Panc1 (cell line): ENCODE measurements at regions of chr2 and their contacts with region 1.

Region 1: DNA sequence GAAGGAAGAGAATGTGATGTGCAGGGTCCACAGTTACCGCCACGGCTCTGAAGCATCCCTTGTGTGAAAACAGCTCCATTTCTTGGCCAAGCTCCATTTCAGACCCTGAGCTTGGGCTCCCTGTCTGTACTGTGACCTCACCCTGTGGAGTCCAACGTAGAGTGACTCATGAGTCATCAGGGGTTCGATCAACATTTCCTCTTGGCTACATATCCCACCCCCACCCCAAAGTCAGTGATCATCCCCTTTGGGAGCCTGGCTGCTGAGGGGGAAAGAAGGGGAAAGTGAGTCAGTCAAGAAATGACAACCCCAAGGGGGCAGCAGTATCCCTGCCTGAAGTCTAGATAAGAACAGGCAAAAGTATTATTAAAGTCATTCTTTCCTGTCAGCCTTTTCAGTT is 62.2 kb downstream of the PAPOLG start:
- DNase-seq: no peak
- ATAC-seq: no peak
- H3K4me3 ChIP-seq: no peak overlapping the region
- H3K27ac ChIP-seq: no peak overlapping the region
- H3K4me1 ChIP-seq: no peaks in the 10 kb centered on the region
- H3K27me3 ChIP-seq: no peaks in the 10 kb centered on the region; the same call in 1 of the 2 replicates
- CTCF ChIP-seq: no peak

Region 2: DNA sequence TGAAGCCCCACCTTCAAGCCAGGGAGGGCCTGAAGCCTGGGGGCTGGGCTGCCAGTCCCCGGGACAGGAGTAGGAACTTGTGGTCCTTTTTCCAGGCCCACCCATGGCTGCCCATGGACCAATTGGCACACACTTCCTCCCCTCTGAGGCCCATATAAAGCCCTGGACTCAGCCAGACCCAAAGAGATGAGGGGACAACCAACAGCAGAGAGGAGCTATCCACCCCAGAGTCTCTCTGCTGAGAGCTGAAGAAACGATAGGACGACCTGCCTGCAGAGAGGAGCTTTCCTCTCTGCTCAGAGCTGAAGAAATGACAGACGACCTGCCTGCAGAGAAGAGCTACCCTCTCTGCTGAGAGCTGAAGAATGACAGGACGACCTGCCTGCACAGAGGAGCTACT is 155.4 kb after region 1 on chr2:
- CTCF ChIA-PET with region 1: interaction called, 11 read pairs
- POLR2A ChIA-PET with region 1: no interaction called
- in situ Hi-C with region 1: no loop called
- intact Hi-C with region 1: no loop called
- DNase-seq: no peak
- ATAC-seq: peak; percentile 53
- H3K4me3 ChIP-seq: no peak overlapping the region
- H3K27ac ChIP-seq: no peak overlapping the region
- H3K4me1 ChIP-seq: no peaks in the 10 kb centered on the region
- H3K27me3 ChIP-seq: no peaks in the 10 kb centered on the region
- CTCF ChIP-seq: no peak